ENCODE measurements at regions of chr11 and their contacts with region 1.

Region 1: DNA sequence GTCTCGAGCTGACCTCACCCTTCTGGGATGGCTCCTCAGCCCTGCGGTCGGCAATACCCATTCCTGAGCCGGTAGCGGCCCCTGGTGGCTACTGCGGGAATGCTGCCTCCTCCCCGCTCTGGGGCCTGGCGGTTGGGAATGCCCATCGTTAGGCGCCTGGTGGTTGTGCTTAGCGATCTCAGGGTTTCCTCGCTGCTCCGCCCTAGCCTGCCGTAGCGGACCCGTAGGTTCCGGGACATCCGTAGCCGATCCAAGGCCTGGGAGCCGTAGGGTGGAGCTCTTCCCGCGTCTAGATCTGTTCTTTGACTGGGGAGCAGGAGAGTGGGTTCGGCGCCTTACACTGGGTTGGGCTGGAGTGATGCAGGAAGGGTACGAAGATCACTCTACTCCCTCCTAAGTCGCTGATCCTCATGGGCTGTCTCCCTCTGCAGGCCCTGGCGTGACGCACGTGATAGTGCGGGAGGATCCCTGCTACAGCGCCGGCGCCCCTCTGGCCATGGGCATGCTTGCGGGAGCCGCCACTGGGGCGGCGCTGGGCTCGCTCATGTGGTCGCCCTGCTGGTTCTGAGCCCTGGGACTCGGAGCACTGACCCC is 14.8 kb downstream of the PLEKHB1 start:
- DNase-seq: peak; percentile 70 to 91 (median 84)
- ATAC-seq: peak; percentile 95
- H3K4me3 ChIP-seq: peak overlapping the region in 1 of 2 experiments; percentile 25
- H3K4me3 Mint-ChIP-seq: peak overlapping the region; percentile 39
- H3K27ac ChIP-seq: no peak overlapping the region
- H3K27ac Mint-ChIP-seq: no peak overlapping the region
- H3K4me1 ChIP-seq: peaks cover 8% of the 10 kb centered on the region
- H3K4me1 Mint-ChIP-seq: peaks cover 17% of the 10 kb centered on the region
- H3K27me3 ChIP-seq: no peaks in the 10 kb centered on the region
- H3K27me3 Mint-ChIP-seq: no peaks in the 10 kb centered on the region
- CTCF ChIP-seq: peak; percentile 95

Region 2: GRCh38 chr11:73393479-73394380 is 267.4 kb before region 1 on chr11:
- CTCF ChIA-PET with region 1: interaction called, 12 read pairs
- POLR2A ChIA-PET with region 1: no interaction called
- intact Hi-C with region 1: no loop called
- DNase-seq: peak; percentile 45 to 81 (median 71)
- ATAC-seq: peak; percentile 79
- H3K4me3 ChIP-seq: no peak overlapping the region
- H3K4me3 Mint-ChIP-seq: no peak overlapping the region
- H3K27ac ChIP-seq: no peak overlapping the region
- H3K27ac Mint-ChIP-seq: no peak overlapping the region
- H3K4me1 ChIP-seq: no peaks in the 10 kb centered on the region
- H3K4me1 Mint-ChIP-seq: peaks cover 3% of the 10 kb centered on the region
- H3K27me3 ChIP-seq: no peaks in the 10 kb centered on the region
- H3K27me3 Mint-ChIP-seq: no peaks in the 10 kb centered on the region
- CTCF ChIP-seq: peak; percentile 62

Region 3: DNA sequence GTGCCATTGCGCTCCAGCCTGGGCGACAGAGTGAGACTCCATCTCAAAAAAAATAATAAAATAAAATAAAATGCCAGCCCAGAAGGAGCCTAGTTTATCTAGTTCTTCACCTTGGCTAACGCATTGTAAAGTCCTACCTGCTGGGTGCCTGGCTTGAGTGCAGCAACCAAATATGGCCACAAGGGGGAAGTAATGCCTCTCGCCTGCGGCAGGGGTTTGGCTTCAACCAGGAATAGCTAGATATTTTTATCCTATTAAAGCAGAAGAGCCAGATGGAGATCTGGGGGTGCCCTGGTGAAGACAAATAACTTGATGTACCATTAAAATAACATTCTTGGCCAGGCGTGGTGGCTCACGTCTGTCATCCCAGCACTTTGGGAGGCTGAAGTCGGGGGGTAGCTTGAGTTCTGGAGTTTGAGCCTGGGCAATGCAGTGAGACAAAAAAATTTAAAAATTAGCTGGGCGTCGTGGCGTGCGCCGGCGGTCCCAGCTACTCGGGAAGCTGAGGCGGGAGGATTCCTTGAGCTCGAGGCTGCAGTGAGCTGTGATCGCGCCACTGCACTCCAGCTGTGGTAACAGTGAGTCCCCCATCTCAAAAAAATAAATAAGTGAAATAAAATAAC is 35.3 kb before region 1 on chr11:
- CTCF ChIA-PET with region 1: interaction called, 351 read pairs
- POLR2A ChIA-PET with region 1: interaction called, 19 read pairs
- intact Hi-C with region 1: loop called (anchors 1 kb)
- DNase-seq: peak; percentile 53 to 80 (median 70)
- ATAC-seq: peak; percentile 95
- H3K4me3 ChIP-seq: no peak overlapping the region
- H3K4me3 Mint-ChIP-seq: no peak overlapping the region
- H3K27ac ChIP-seq: no peak overlapping the region
- H3K27ac Mint-ChIP-seq: no peak overlapping the region
- H3K4me1 ChIP-seq: no peaks in the 10 kb centered on the region
- H3K4me1 Mint-ChIP-seq: peaks cover 2% of the 10 kb centered on the region
- H3K27me3 ChIP-seq: no peaks in the 10 kb centered on the region
- H3K27me3 Mint-ChIP-seq: peaks cover 16% of the 10 kb centered on the region
- CTCF ChIP-seq: peak; percentile 99

Region 4: GRCh38 chr11:73640592-73640991 is 20.5 kb before region 1 on chr11:
- CTCF ChIA-PET with region 1: interaction called, 46 read pairs
- POLR2A ChIA-PET with region 1: no interaction called
- intact Hi-C with region 1: no loop called
- DNase-seq: no peak
- ATAC-seq: no peak
- H3K4me3 ChIP-seq: no peak overlapping the region
- H3K4me3 Mint-ChIP-seq: no peak overlapping the region
- H3K27ac ChIP-seq: no peak overlapping the region
- H3K27ac Mint-ChIP-seq: peak overlapping the region; percentile 58
- H3K4me1 ChIP-seq: peaks cover 9% of the 10 kb centered on the region
- H3K4me1 Mint-ChIP-seq: peaks cover 8% of the 10 kb centered on the region
- H3K27me3 ChIP-seq: peaks cover 0 to 1% of the 10 kb centered on the region in 2 experiments
- H3K27me3 Mint-ChIP-seq: no peaks in the 10 kb centered on the region
- CTCF ChIP-seq: no peak

Region 5: DNA sequence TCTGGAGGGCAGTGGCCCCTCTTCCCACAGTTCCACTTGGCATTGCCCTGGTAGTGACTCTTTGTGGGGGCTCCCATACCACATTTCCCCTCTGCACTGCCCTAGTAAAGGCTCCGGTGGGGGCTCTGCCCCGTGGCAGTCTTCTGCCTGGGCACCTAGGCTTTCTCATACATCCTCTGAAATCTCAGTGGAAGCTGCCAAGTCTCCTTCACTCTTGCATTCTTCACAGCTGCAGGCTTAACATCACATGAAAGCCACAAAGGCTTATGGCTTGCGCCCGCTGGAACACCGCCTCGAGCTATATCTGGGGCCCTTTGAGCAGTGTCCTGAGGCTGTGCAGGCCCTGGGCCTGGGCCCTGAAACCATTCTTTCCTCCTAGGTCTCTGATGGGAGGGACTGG is 10.6 kb after region 1 on chr11:
- CTCF ChIA-PET with region 1: interaction called, 16 read pairs
- POLR2A ChIA-PET with region 1: no interaction called
- intact Hi-C with region 1: no loop called
- DNase-seq: peak in 1 of 9 experiments; percentile 37
- ATAC-seq: no peak
- H3K4me3 ChIP-seq: no peak overlapping the region
- H3K4me3 Mint-ChIP-seq: no peak overlapping the region
- H3K27ac ChIP-seq: no peak overlapping the region
- H3K27ac Mint-ChIP-seq: no peak overlapping the region
- H3K4me1 ChIP-seq: no peaks in the 10 kb centered on the region
- H3K4me1 Mint-ChIP-seq: no peaks in the 10 kb centered on the region
- H3K27me3 ChIP-seq: no peaks in the 10 kb centered on the region
- H3K27me3 Mint-ChIP-seq: no peaks in the 10 kb centered on the region
- CTCF ChIP-seq: no peak

Region 6: GRCh38 chr11:73705053-73705452 is 43.9 kb after region 1 on chr11:
- CTCF ChIA-PET with region 1: no interaction called
- POLR2A ChIA-PET with region 1: no interaction called
- intact Hi-C with region 1: no loop called
- DNase-seq: no peak
- ATAC-seq: no peak
- H3K4me3 ChIP-seq: no peak overlapping the region
- H3K4me3 Mint-ChIP-seq: no peak overlapping the region
- H3K27ac ChIP-seq: no peak overlapping the region
- H3K27ac Mint-ChIP-seq: no peak overlapping the region
- H3K4me1 ChIP-seq: no peaks in the 10 kb centered on the region
- H3K4me1 Mint-ChIP-seq: no peaks in the 10 kb centered on the region
- H3K27me3 ChIP-seq: no peaks in the 10 kb centered on the region
- H3K27me3 Mint-ChIP-seq: no peaks in the 10 kb centered on the region
- CTCF ChIP-seq: no peak

Region 7: DNA sequence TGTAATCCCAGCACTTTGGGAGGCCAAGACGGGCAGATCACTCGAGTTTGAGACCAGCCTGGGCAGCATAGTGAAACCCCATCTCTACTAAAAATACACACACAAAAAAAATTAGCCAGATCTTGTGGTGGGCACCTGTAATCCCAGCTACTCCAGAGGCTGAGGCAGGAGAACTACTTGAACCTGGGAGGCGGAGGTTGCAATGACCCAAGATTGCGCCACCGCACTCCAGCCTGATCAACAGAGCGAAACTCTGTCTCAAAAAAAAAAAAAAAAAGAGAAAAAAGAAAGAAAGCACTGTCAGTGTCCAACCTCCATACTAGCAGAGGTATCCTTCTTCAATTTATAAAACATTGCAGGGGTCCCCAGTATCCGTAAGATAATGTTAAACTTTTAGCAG is 81.9 kb after region 1 on chr11:
- CTCF ChIA-PET with region 1: no interaction called
- POLR2A ChIA-PET with region 1: no interaction called
- intact Hi-C with region 1: no loop called
- DNase-seq: no peak
- ATAC-seq: no peak
- H3K4me3 ChIP-seq: no peak overlapping the region
- H3K4me3 Mint-ChIP-seq: no peak overlapping the region
- H3K27ac ChIP-seq: no peak overlapping the region
- H3K27ac Mint-ChIP-seq: no peak overlapping the region
- H3K4me1 ChIP-seq: no peaks in the 10 kb centered on the region
- H3K4me1 Mint-ChIP-seq: peaks cover 29% of the 10 kb centered on the region
- H3K27me3 ChIP-seq: no peaks in the 10 kb centered on the region
- H3K27me3 Mint-ChIP-seq: no peaks in the 10 kb centered on the region
- CTCF ChIP-seq: no peak